Activated CD4-positive, alpha-beta T cell treated with anti-CD3 and anti-CD28 coated beads for 36 hours (primary cell): ENCODE measurements at regions of chr20 and their contacts with region 1.

Region 1: DNA sequence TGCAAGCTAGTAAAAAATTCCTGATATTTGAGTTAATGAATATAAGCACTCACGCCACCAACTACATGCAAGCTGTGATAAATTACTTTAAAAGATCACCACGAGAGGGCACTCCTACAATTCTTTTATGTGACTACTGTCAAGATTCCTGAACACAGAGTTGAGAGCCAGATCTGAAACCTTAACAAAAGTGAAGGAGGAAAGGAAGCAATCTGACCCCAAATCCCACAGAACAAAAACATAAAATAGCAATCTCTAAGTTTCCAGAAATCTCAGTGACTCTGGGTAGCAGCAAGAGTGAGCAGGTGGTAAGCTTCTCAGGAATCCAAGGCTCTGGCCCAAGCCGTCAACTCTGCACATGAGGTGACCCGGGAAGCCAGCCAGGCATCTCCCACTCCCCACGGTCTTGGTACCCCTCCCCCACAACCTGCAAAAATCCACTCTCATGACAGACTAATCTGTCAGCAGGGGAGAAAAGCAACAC is 55.1 kb downstream of the STAU1 start:
- DNase-seq: no peak
- ATAC-seq: peak; percentile 61
- H3K4me3 Mint-ChIP-seq: no peak overlapping the region
- H3K27ac Mint-ChIP-seq: peak overlapping the region; percentile 37
- H3K4me1 Mint-ChIP-seq: peaks cover 4% of the 10 kb centered on the region
- H3K27me3 Mint-ChIP-seq: no peaks in the 10 kb centered on the region

Region 2: GRCh38 chr20:49207076-49207475 is 74.0 kb after region 1 on chr20:
- CTCF ChIA-PET with region 1: interaction called, 11 read pairs
- POLR2A ChIA-PET with region 1: no interaction called
- intact Hi-C with region 1: no loop called
- DNase-seq: peak; percentile 55
- ATAC-seq: peak; percentile 64
- H3K4me3 Mint-ChIP-seq: no peak overlapping the region
- H3K27ac Mint-ChIP-seq: no peak overlapping the region
- H3K4me1 Mint-ChIP-seq: no peaks in the 10 kb centered on the region
- H3K27me3 Mint-ChIP-seq: no peaks in the 10 kb centered on the region

Region 3: DNA sequence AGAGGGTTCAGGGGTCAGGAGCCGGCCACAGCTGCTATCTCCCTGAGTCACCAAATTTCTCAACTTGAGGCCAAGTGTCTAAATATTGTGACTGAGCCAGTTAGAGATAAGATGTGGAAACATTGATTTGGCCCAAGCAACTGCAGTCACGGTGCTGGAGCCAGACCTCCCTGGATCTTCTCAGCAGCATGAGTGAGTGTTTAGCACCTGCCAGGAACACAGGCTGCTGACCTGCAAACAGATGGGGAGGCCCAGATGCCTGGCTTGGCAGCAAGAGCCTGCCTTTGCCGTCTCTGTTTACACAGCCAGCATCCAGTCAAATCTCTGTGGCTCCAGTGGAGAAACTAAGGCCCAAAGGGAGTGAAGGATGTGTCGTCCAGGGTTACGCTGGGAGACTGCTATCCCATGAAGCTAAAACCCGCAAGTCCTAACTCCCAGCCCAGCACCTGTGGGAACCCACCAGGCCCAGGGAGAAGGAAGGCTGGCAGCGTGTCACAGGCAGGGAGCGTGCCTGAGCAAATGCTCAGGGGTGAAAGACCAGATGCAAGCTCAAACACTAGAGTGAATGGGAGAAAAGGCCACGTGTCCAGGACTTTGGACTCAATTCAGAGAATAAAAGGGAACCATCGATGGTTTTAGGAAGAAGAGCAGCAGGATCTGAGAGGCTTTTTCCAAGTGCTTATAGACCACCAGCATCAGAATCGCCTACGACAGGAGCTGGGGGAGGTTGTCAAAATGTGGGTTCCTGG is 450.8 kb after region 1 on chr20:
- CTCF ChIA-PET with region 1: no interaction called
- POLR2A ChIA-PET with region 1: no interaction called
- intact Hi-C with region 1: no loop called
- DNase-seq: no peak
- ATAC-seq: no peak
- H3K4me3 Mint-ChIP-seq: no peak overlapping the region
- H3K27ac Mint-ChIP-seq: no peak overlapping the region
- H3K4me1 Mint-ChIP-seq: peaks cover 3% of the 10 kb centered on the region
- H3K27me3 Mint-ChIP-seq: peaks cover 6% of the 10 kb centered on the region